Activated CD4-positive, alpha-beta T cell treated with anti-CD3 and anti-CD28 coated beads, Interleukin-2, amount 10 ng/mL, durations not matched to agents 24 days and 14 days (primary cell): ENCODE measurements at regions of chr4 and their contacts with region 1.

Region 1: GRCh38 chr4:139651282-139652194 is 14.1 kb upstream of the MGST2 start:
- DNase-seq: peak; percentile 88
- H3K4me3 Mint-ChIP-seq: no peak overlapping the region
- H3K27ac Mint-ChIP-seq: no peak overlapping the region
- H3K4me1 Mint-ChIP-seq: peaks cover 10% of the 10 kb centered on the region
- H3K27me3 Mint-ChIP-seq: peaks cover 5% of the 10 kb centered on the region

Region 2: DNA sequence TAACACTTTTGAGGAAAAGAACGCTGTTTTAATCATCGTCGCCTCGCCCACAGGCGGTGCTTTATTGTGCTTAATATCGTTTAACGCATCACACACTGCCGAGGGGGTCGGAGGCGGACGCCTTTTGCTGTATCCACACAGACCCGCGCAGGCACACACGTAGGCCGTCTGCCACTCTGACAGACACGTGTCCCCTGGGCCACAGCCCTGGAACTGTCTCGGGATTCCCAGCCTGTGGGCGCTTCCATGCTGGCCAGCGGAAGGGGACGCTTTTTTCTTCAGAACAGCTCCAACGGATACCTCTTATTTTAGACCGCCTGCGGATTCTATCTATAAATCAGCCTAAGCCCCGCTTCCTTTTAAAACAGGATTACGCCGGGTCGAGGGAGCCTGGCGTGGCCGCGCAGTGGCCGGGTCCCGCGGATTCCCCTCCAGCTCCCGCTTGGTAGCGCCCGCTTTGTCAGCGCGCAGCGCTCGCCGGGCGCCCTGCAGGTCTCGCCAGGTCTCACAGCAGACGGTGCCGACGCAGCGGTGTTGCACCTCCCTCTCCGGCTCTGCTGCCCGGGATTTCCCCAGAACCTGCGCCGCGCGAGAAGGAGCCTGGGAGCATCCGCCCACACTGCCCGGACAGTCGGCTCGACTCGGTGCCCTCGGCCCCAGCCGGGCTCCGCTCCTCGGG is 636.1 kb before region 1 on chr4 and contains the start of gene NOCT:
- intact Hi-C with region 1: loop called (anchors 10 kb)
- DNase-seq: peak; percentile 97
- H3K4me3 Mint-ChIP-seq: peak within 1 kb of the TSS; percentile 93
- H3K27ac Mint-ChIP-seq: peak within 1 kb of the TSS; percentile 96
- H3K4me1 Mint-ChIP-seq: peaks cover 35% of the 10 kb centered on the region
- H3K27me3 Mint-ChIP-seq: no peaks in the 10 kb centered on the region
- total RNA-seq, gene NOCT: 21.3 and 25.3 TPM in 2 replicates

Region 3: DNA sequence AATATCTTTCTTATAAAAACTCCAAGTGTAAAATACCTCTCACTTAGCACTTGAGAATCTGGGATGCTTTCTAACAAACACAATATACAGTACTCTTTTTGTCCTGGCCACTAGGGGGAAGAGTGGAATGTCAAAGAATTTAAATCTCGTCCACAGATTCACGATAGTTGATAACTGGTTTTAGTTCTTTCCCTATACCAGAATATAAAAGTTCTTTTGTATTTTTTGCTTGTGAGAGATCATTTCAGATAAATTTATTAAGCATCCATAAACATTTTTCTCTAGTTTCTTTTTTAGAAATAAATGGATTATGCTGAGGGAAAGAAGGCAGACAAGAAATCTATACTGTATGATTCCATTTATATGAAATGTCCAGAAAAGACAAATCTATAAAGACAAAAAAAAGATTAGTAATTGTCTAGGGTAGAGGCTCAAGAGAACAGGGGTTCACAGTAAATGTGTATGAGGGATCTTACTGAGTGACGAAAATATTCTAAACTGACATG is 422.0 kb before region 1 on chr4:
- intact Hi-C with region 1: loop called (anchors 1 kb)
- DNase-seq: peak; percentile 75
- H3K4me3 Mint-ChIP-seq: no peak overlapping the region
- H3K27ac Mint-ChIP-seq: no peak overlapping the region
- H3K4me1 Mint-ChIP-seq: no peaks in the 10 kb centered on the region
- H3K27me3 Mint-ChIP-seq: no peaks in the 10 kb centered on the region

Region 4: GRCh38 chr4:139301113-139301820 is 350.3 kb before region 1 on chr4 and contains the start of gene NAA15:
- intact Hi-C with region 1: loop called (anchors 10 kb)
- DNase-seq: peak; percentile 99
- H3K4me3 Mint-ChIP-seq: peak within 1 kb of the TSS; percentile 99
- H3K27ac Mint-ChIP-seq: peak within 1 kb of the TSS; percentile 100
- H3K4me1 Mint-ChIP-seq: peaks cover 52% of the 10 kb centered on the region
- H3K27me3 Mint-ChIP-seq: no peaks in the 10 kb centered on the region
- total RNA-seq, gene NAA15: 114 and 115 TPM in 2 replicates

Region 5: GRCh38 chr4:139416073-139416673 is 235.4 kb before region 1 on chr4:
- intact Hi-C with region 1: loop called (anchors 5 kb)
- DNase-seq: peak; percentile 74
- H3K4me3 Mint-ChIP-seq: no peak overlapping the region
- H3K27ac Mint-ChIP-seq: no peak overlapping the region
- H3K4me1 Mint-ChIP-seq: peaks cover 17% of the 10 kb centered on the region
- H3K27me3 Mint-ChIP-seq: no peaks in the 10 kb centered on the region

Region 6: GRCh38 chr4:139499026-139499585 is 152.4 kb before region 1 on chr4:
- intact Hi-C with region 1: loop called (anchors 5 kb)
- DNase-seq: no peak
- H3K4me3 Mint-ChIP-seq: no peak overlapping the region
- H3K27ac Mint-ChIP-seq: no peak overlapping the region
- H3K4me1 Mint-ChIP-seq: peaks cover 2% of the 10 kb centered on the region
- H3K27me3 Mint-ChIP-seq: no peaks in the 10 kb centered on the region

Region 7: DNA sequence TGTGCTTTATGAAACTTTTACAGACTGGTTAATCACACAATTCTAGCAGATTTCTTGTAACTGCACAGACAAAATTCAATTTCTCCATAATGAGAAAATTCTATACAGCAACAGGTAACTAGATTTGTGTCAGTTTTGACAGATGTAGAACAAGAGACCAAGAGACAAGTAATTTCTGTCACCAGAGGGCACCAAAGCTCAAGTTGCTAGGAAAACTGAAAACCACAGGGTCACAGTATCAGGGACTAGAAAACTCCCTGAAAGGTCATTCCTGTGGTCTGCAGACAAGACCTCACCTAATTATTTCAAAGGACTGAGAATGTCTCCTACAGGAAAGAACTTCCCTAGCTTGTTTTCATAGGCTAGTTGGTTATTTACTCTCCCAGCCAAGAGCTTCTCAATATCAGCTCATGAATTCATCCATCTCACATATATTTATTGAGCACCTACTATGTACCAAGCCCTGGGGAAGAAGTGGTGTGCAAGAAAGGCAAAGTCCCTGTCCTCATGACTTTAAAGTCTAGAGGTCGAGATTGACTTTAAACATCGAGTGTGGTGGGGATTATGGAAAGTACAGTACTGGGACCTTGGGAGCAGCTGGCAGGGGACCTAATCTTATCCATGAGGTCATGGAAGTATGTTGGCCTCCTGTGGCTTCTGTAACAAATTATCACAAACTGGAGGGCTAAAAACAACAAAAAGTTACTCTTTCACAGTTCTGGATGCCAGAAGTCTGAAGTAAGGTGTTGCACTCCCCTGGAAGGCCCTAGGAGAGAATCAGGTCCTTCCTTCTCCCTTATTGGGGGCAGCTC is 47.8 kb before region 1 on chr4:
- intact Hi-C with region 1: loop called (anchors 1 kb)
- DNase-seq: peak; percentile 84
- H3K4me3 Mint-ChIP-seq: no peak overlapping the region
- H3K27ac Mint-ChIP-seq: no peak overlapping the region
- H3K4me1 Mint-ChIP-seq: peaks cover 18% of the 10 kb centered on the region
- H3K27me3 Mint-ChIP-seq: peaks cover 11% of the 10 kb centered on the region